ENCODE measurements at regions of chr22 and their contacts with region 1.

Region 1: GRCh38 chr22:20916983-20917810 is at the start of gene CRKL:
- DNase-seq: peak; percentile 98
- ATAC-seq: peak; percentile 98
- H3K4me3 Mint-ChIP-seq: peak within 1 kb of the TSS; percentile 99
- H3K27ac Mint-ChIP-seq: peak within 1 kb of the TSS; percentile 93
- H3K4me1 Mint-ChIP-seq: peaks cover 27% of the 10 kb centered on the region
- H3K27me3 Mint-ChIP-seq: no peaks in the 10 kb centered on the region
- total RNA-seq, gene CRKL: 80.8 to 92.0 TPM

Region 2: GRCh38 chr22:20783844-20784723 is 133.1 kb before region 1 on chr22:
- CTCF ChIA-PET with region 1: no interaction called
- POLR2A ChIA-PET with region 1: no interaction called
- intact Hi-C with region 1: loop called in 1 of 2 experiments (anchors 5 kb)
- DNase-seq: peak; percentile 66
- ATAC-seq: no peak
- H3K4me3 Mint-ChIP-seq: no peak overlapping the region
- H3K27ac Mint-ChIP-seq: no peak overlapping the region
- H3K4me1 Mint-ChIP-seq: peaks cover 13% of the 10 kb centered on the region
- H3K27me3 Mint-ChIP-seq: no peaks in the 10 kb centered on the region

Region 3: DNA sequence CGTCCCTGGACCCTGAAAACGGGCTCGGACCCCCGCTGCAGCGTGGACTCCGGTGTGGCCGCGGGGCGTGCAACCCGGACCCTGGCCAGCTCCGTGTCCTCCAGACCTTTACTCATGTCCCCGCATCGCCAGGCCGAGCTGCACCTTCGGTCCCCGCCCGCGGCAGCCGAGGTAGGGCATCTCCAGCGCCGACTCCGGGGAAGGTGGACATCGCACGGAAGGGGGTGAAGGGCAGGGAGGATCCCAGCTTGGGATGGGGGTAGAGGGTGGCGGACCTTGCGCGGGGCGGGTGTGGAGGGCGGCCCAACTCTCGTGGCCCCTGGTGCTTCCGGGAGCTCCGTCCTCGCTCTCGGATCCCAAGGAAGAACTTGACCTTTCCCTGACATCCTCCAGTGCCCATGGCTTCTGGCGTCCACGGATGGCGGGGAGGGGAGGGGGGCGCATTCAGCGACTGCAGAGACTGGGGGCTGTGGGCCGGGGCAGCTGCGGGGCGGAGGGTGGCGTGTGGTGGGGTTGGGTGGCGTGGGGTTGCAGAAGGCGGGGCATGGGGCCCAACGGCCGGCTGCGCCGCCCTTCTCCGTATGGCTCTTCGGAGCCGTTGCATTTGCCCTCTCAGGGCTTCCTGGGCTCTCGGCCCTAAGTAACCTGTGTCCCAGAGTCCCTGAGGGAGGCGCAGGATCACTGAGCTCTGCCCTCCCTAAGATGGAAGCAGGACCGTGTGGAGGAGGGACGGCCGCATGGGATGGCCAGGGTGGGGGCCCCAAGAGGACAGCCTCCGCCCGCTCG is 40.3 kb after region 1 on chr22:
- CTCF ChIA-PET with region 1: interaction called, 3 read pairs
- POLR2A ChIA-PET with region 1: no interaction called
- intact Hi-C with region 1: loop called (anchors 5 kb)
- DNase-seq: no peak
- ATAC-seq: no peak
- H3K4me3 Mint-ChIP-seq: peak overlapping the region; percentile 26
- H3K27ac Mint-ChIP-seq: no peak overlapping the region
- H3K4me1 Mint-ChIP-seq: peaks cover 15% of the 10 kb centered on the region
- H3K27me3 Mint-ChIP-seq: peaks cover 16% of the 10 kb centered on the region

Region 4: GRCh38 chr22:20981787-20982562 is 64.8 kb after region 1 on chr22 and contains the start of gene LZTR1:
- CTCF ChIA-PET with region 1: interaction called, 3 read pairs
- POLR2A ChIA-PET with region 1: no interaction called
- intact Hi-C with region 1: loop called in 1 of 2 experiments (anchors 1 kb)
- DNase-seq: peak; percentile 85
- ATAC-seq: peak; percentile 74
- H3K4me3 Mint-ChIP-seq: peak within 1 kb of the TSS; percentile 98
- H3K27ac Mint-ChIP-seq: peak within 1 kb of the TSS; percentile 92
- H3K4me1 Mint-ChIP-seq: peaks cover 40% of the 10 kb centered on the region
- H3K27me3 Mint-ChIP-seq: no peaks in the 10 kb centered on the region
- total RNA-seq, gene LZTR1: 31.9 to 40.5 TPM

Region 5: GRCh38 chr22:21067655-21068382 is 150.6 kb after region 1 on chr22:
- CTCF ChIA-PET with region 1: no interaction called
- POLR2A ChIA-PET with region 1: no interaction called
- intact Hi-C with region 1: no loop called
- DNase-seq: no peak
- ATAC-seq: no peak
- H3K4me3 Mint-ChIP-seq: no peak overlapping the region
- H3K27ac Mint-ChIP-seq: no peak overlapping the region
- H3K4me1 Mint-ChIP-seq: peaks cover 2% of the 10 kb centered on the region
- H3K27me3 Mint-ChIP-seq: no peaks in the 10 kb centered on the region

Region 6: GRCh38 chr22:21082248-21082647 is 165.1 kb after region 1 on chr22:
- CTCF ChIA-PET with region 1: no interaction called
- POLR2A ChIA-PET with region 1: no interaction called
- intact Hi-C with region 1: loop called in 1 of 2 experiments (anchors 10 kb)
- DNase-seq: no peak
- ATAC-seq: no peak
- H3K4me3 Mint-ChIP-seq: no peak overlapping the region
- H3K27ac Mint-ChIP-seq: no peak overlapping the region
- H3K4me1 Mint-ChIP-seq: no peaks in the 10 kb centered on the region
- H3K27me3 Mint-ChIP-seq: no peaks in the 10 kb centered on the region

Region 7: DNA sequence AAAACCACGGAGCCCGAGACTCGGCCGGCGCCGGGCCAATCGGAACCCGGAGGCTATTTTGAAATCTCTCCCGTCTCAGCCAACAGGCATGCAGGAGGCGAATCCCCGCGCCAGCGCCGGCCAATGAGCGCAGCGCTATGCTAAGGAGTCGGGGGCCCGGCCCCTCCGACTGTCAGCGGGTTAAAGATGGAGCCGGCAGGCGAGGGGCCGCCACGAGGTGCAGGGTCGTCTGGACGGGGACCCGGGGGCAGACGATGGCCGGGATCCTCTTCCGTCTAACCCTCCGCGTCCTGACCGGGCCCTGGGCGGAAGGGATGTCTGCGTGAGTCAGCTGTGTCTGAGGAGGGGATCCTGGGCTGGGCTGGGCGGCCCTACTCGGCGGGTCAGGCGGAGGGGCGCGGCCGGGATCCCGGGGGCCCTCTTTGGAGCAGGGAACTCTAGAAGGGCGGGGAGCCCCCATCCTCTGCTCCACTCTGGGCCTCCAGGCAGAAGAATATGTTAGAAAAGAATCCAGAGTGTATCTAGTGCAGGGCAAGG is 734.9 kb after region 1 on chr22:
- CTCF ChIA-PET with region 1: no interaction called
- POLR2A ChIA-PET with region 1: no interaction called
- intact Hi-C with region 1: loop called in 1 of 2 experiments (anchors 1 kb)
- DNase-seq: peak; percentile 95
- ATAC-seq: peak; percentile 97
- H3K4me3 Mint-ChIP-seq: peak overlapping the region; percentile 85
- H3K27ac Mint-ChIP-seq: peak overlapping the region; percentile 86
- H3K4me1 Mint-ChIP-seq: peaks cover 23% of the 10 kb centered on the region
- H3K27me3 Mint-ChIP-seq: no peaks in the 10 kb centered on the region

Measured in activated CD4-positive, alpha-beta T cell treated with anti-CD3 and anti-CD28 coated beads for 36 hours (primary cell).